ENCODE measurements at regions of chr21 and their contacts with region 1.

Region 1: DNA sequence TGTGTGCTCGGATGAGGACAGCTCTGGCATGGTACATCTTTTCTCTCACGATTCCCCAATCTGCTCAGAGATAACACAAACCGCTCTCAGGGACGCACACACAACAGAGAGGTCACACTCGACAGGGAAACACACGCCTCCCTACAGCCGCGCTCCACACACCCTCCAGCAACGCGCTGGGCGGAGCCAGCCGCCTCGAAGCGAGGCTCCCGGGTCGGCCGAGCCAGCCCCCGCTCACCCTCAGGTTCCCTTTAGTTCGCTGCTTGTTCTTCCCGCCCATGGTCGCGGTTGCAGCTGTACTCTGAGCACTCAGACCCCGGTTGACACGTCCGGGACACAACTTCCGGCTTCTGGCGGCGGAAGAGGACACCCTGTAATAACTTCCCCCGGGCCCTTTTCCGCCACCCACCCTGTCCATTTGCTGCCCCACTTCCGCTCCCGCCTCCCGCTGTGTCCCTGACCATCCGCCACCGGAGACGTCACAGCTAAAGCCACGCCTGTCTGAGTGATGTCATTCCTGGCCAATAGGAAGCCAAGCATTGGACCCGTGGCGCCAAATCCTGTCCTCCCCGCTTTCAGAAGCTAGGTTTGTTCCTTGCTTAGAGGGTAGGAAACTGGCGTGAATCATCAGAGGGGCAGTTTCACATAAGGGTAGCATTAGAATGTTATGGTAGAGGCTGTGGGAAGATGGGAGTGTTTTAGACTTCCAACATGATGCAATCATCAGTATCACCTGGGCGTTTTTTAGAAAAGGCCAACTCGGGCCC is at the start of gene LTN1:
- DNase-seq: peak; percentile 100
- H3K4me3 Mint-ChIP-seq: peak within 1 kb of the TSS; percentile 99
- H3K27ac Mint-ChIP-seq: peak within 1 kb of the TSS; percentile 97
- H3K4me1 Mint-ChIP-seq: peaks cover 51% of the 10 kb centered on the region
- H3K27me3 Mint-ChIP-seq: no peaks in the 10 kb centered on the region
- total RNA-seq, gene LTN1: 18.5 to 21.2 TPM

Region 2: GRCh38 chr21:28953247-28953646 is 39.5 kb before region 1 on chr21:
- CTCF ChIA-PET with region 1: no interaction called
- intact Hi-C with region 1: no loop called
- DNase-seq: no peak
- H3K4me3 Mint-ChIP-seq: no peak overlapping the region
- H3K27ac Mint-ChIP-seq: no peak overlapping the region
- H3K4me1 Mint-ChIP-seq: peaks cover 11% of the 10 kb centered on the region
- H3K27me3 Mint-ChIP-seq: no peaks in the 10 kb centered on the region

Region 3: DNA sequence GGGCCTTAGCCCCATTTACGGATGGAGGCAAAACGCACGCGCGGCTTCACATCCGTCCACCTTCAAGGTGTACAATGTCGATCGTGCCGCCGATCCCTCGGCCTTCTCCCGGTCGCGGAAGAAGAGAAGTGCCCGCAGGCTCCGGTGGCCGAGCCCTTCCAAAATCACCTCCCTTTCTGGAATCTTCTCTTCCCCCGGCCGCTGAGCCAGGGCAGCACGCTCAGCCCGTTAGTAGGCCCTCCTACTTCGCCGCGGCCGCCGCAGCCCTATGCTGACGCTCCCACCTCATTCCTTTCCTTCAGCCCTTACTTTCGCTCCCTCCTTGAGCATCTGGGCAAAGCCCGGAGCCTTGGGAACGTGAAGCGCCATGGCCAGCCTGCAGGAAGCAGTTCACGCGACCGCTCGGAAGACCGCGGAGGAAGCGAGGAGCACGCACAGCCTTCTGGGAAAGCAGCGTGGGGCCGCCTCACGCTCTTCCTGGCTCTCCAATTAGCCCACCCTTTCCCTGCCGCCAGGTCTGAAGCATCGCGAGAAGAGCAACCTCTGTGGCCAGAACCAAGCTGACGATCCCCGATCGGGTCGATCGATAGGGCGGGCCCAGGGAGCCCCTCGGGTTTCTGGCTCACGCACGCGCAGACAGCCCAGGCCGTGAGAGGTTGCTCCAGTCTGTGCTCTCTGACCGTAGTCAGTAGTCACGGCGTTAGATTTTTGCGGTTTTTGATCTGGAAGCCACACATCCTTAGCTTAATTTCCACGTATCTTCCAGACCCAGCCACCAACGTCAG is 80.7 kb after region 1 on chr21 and contains the start of gene CCT8:
- CTCF ChIA-PET with region 1: no interaction called
- intact Hi-C with region 1: loop called (anchors 1 kb)
- DNase-seq: peak; percentile 99
- H3K4me3 Mint-ChIP-seq: peak within 1 kb of the TSS; percentile 94
- H3K27ac Mint-ChIP-seq: peak within 1 kb of the TSS; percentile 95
- H3K4me1 Mint-ChIP-seq: peaks cover 46% of the 10 kb centered on the region
- H3K27me3 Mint-ChIP-seq: no peaks in the 10 kb centered on the region
- total RNA-seq, gene CCT8: 482 to 515 TPM

Region 4: DNA sequence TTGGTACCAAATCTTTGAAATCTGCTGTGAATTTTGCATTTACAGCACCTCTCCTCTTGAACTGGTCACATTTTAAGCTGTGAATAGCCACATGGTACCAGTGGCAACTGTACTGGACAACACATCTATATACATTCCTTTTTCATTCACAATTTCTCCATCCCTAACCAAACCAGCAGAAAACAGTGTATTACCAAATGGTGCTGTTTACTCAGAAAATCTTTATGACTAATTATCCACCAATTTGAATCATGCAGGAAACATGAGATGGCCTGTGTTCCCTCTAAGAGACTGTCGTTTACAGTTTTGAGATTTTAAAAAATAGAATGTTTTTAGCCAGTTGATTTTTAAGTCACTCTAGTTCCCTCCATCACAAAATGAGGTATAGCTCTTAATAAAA is 98.3 kb after region 1 on chr21:
- CTCF ChIA-PET with region 1: no interaction called
- intact Hi-C with region 1: no loop called
- DNase-seq: no peak
- H3K4me3 Mint-ChIP-seq: no peak overlapping the region
- H3K27ac Mint-ChIP-seq: no peak overlapping the region
- H3K4me1 Mint-ChIP-seq: peaks cover 5% of the 10 kb centered on the region
- H3K27me3 Mint-ChIP-seq: no peaks in the 10 kb centered on the region

Region 5: DNA sequence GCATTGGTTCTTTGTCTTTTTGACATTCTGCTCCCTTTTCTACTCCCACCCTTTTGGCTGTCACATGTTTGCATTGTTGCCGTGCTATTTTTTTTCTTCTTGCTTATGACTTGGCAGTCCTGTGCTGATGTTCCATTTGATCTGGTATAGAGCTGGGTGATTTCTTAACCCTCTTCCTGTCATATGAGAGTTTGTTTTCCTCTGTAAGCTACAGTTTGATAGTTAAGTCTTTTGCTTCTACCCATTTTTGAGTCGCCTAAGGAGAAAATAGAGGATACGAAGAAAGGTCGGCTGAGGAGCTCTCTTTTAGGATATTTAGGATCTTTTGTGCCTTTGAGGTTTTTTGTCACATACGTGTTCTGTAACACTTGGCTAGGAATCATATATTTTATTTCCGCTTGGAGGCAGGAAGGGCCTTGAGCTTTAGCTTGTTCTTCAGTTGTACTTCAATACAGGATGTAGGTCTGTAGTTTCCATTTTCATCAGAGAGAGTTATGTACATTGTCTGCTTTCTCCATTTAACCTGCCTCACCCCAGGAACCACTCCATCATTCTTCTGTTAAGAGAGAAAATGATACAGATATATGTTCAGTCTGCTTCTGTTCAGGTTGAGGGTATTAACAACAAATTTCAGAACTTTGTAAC is 456.7 kb after region 1 on chr21:
- CTCF ChIA-PET with region 1: no interaction called
- intact Hi-C with region 1: loop called (anchors 1 kb)
- DNase-seq: peak; percentile 16
- H3K4me3 Mint-ChIP-seq: peak overlapping the region; percentile 46
- H3K27ac Mint-ChIP-seq: peak overlapping the region; percentile 92
- H3K4me1 Mint-ChIP-seq: peaks cover 17% of the 10 kb centered on the region
- H3K27me3 Mint-ChIP-seq: no peaks in the 10 kb centered on the region

Measured in activated naive CD4-positive, alpha-beta T cell treated with anti-CD3 and anti-CD28 coated beads for 36 hours (primary cell).